Spleen (tissue), 13 donors: ENCODE measurements at regions of chr10 and their contacts with region 1.

Region 1: GRCh38 chr10:90862908-90863514 is 5.2 kb upstream of the HTR7 start:
- DNase-seq: no peak
- H3K4me3 ChIP-seq: no peak overlapping the region
- H3K27ac ChIP-seq: no peak overlapping the region
- H3K4me1 ChIP-seq: peaks cover 0 to 13% (median 6%) of the 10 kb centered on the region in 6 donors
- H3K27me3 ChIP-seq: peaks cover 0 to 47% (median 0%) of the 10 kb centered on the region in 7 donors
- CTCF ChIP-seq: peak in 9 of 11 experiments; percentile 15 to 67 (median 55)
- POLR2A ChIP-seq: no peak

Region 2: DNA sequence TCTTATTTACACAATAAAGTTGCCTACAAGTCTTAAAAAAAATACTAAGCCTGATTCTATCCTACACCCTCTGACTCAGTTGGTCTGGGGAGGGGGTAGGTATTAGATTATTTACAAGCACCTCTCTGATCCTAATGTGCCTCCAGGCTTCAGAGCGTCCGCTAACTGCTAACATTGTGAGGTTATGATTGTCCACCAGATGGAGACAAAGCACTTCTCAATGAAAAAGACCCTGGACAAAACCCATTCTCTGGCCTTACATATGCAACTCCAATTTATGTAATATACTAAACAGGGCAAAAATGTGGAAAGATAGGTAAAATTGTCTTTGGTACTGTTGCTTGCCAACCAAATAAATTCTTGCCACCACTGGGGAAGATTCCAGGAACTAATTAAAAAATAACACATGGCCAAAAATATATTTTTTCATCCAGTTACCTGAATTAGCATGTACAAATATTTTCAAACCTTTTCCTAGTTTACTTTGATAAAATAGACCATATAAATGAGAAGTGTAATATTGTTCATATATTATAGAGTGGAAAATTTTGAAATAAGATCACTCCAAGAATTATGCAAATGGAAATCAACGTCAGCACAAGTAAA is 1069.3 kb before region 1 on chr10:
- intact Hi-C with region 1: loop called (anchors 10 kb)
- DNase-seq: no peak
- H3K4me3 ChIP-seq: no peak overlapping the region
- H3K27ac ChIP-seq: no peak overlapping the region
- H3K4me1 ChIP-seq: no peaks in the 10 kb centered on the region
- H3K27me3 ChIP-seq: peaks cover 0 to 8% (median 0%) of the 10 kb centered on the region in 7 donors
- CTCF ChIP-seq: peak; percentile 22 to 87 (median 71)
- POLR2A ChIP-seq: no peak

Region 3: GRCh38 chr10:90462749-90463470 is 400.1 kb before region 1 on chr10:
- intact Hi-C with region 1: no loop called
- DNase-seq: no peak
- H3K4me3 ChIP-seq: no peak overlapping the region
- H3K27ac ChIP-seq: no peak overlapping the region
- H3K4me1 ChIP-seq: no peaks in the 10 kb centered on the region
- H3K27me3 ChIP-seq: peaks cover 0 to 5% (median 0%) of the 10 kb centered on the region in 7 donors
- CTCF ChIP-seq: no peak
- POLR2A ChIP-seq: no peak

Region 4: GRCh38 chr10:90571481-90572258 is 291.3 kb before region 1 on chr10:
- intact Hi-C with region 1: no loop called
- DNase-seq: no peak
- H3K4me3 ChIP-seq: no peak overlapping the region
- H3K27ac ChIP-seq: no peak overlapping the region
- H3K4me1 ChIP-seq: no peaks in the 10 kb centered on the region
- H3K27me3 ChIP-seq: peaks cover 0 to 8% (median 0%) of the 10 kb centered on the region in 7 donors
- CTCF ChIP-seq: no peak
- POLR2A ChIP-seq: no peak

Region 5: GRCh38 chr10:90751107-90751997 is 111.7 kb before region 1 on chr10:
- intact Hi-C with region 1: loop called (anchors 10 kb)
- DNase-seq: no peak
- H3K4me3 ChIP-seq: no peak overlapping the region
- H3K27ac ChIP-seq: no peak overlapping the region
- H3K4me1 ChIP-seq: no peaks in the 10 kb centered on the region
- H3K27me3 ChIP-seq: peaks cover 0 to 17% (median 0%) of the 10 kb centered on the region in 7 donors
- CTCF ChIP-seq: peak in 10 of 11 experiments; percentile 29 to 70 (median 54)
- POLR2A ChIP-seq: no peak

Region 6: GRCh38 chr10:90779548-90779947 is 83.5 kb before region 1 on chr10:
- intact Hi-C with region 1: no loop called
- DNase-seq: no peak
- H3K4me3 ChIP-seq: no peak overlapping the region
- H3K27ac ChIP-seq: no peak overlapping the region
- H3K4me1 ChIP-seq: peaks cover 0 to 3% (median 0%) of the 10 kb centered on the region in 6 donors
- H3K27me3 ChIP-seq: peaks cover 0 to 4% (median 0%) of the 10 kb centered on the region in 7 donors
- CTCF ChIP-seq: no peak
- POLR2A ChIP-seq: no peak